ENCODE measurements at regions of chr1 and their contacts with region 1.

Region 1: DNA sequence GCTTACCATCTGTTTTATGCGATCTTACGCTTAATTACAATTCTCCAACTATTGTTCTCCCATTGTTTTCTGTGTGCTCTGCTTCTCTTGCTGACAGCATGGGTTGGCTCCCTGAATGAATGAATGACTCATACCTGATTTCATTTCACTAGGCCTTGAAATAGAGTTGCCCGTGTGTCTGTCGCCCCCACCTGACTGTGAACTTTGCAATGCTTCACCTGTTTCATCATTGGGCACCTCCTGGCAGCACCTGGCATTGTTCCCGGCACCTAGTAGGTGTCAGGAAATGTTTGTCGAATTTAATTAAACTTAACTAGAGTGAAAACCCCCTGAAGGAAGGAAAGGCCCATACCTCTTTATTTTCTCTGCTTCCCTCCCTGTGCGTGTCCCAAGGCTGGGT is 120.5 kb upstream of the KLHDC7A start:
- DNase-seq: no peak
- ATAC-seq: no peak
- H3K4me3 ChIP-seq: no peak overlapping the region
- H3K27ac ChIP-seq: no peak overlapping the region
- H3K4me1 ChIP-seq: no peaks in the 10 kb centered on the region
- H3K27me3 ChIP-seq: peaks cover 0 to 67% (median 5%) of the 10 kb centered on the region in 9 donors
- CTCF ChIP-seq: no peak
- POLR2A ChIP-seq: no peak

Region 2: GRCh38 chr1:18199462-18199861 is 160.8 kb before region 1 on chr1:
- intact Hi-C with region 1: no loop called
- DNase-seq: no peak
- ATAC-seq: no peak
- H3K4me3 ChIP-seq: no peak overlapping the region
- H3K27ac ChIP-seq: no peak overlapping the region
- H3K4me1 ChIP-seq: no peaks in the 10 kb centered on the region
- H3K27me3 ChIP-seq: peaks cover 0 to 68% (median 14%) of the 10 kb centered on the region in 9 donors
- CTCF ChIP-seq: no peak
- POLR2A ChIP-seq: no peak

Region 3: DNA sequence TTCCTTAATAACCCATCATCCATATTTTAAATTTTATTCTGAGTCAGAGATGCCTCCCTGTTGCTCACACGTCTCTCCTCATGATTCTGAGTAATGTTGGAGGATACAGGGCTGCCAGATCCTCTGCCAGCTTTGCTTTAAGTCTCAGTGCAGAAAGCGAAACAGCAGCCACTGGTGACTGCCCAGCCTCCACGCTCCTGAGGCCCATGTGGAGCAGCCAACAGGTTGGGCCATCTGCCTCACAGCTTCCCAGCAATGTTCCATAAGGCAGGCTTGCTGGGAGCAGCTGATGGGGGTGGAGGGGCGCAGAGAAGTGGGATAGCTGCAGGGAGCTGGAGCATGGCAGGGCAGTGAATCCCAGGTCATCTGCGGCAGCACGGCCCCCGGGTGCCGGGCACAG is 148.5 kb before region 1 on chr1:
- intact Hi-C with region 1: no loop called
- DNase-seq: no peak
- ATAC-seq: peak in 1 of 4 donors; percentile 43
- H3K4me3 ChIP-seq: no peak overlapping the region
- H3K27ac ChIP-seq: no peak overlapping the region
- H3K4me1 ChIP-seq: no peaks in the 10 kb centered on the region
- H3K27me3 ChIP-seq: peaks cover 0 to 14% (median 0%) of the 10 kb centered on the region in 9 donors
- CTCF ChIP-seq: no peak
- POLR2A ChIP-seq: no peak

Region 4: DNA sequence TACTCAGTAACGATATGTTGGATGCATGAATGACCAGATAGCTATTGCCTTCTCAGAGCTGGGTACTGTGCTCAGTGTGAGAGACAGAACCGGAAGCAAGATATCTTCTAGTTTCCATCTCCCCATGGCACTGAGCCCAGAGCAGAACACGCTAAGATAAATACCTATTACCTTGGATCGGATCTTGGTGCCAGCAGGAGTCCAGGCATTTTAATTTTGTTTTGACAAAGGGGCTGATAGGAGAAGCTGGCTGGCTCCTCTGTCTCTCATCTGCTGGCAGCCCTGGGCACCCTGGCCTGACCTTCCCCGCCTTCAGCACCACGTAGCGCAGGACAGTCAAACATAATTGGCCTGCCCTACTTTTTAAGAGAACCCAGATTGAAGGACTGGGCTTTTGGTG is 40.2 kb before region 1 on chr1:
- intact Hi-C with region 1: no loop called
- DNase-seq: no peak
- ATAC-seq: no peak
- H3K4me3 ChIP-seq: no peak overlapping the region
- H3K27ac ChIP-seq: no peak overlapping the region
- H3K4me1 ChIP-seq: no peaks in the 10 kb centered on the region
- H3K27me3 ChIP-seq: peaks cover 0 to 27% (median 4%) of the 10 kb centered on the region in 9 donors
- CTCF ChIP-seq: no peak
- POLR2A ChIP-seq: no peak

Region 5: GRCh38 chr1:18440385-18441226 is 80.4 kb after region 1 on chr1:
- intact Hi-C with region 1: loop called in 1 of 10 experiments (anchors 10 kb)
- DNase-seq: no peak
- ATAC-seq: no peak
- H3K4me3 ChIP-seq: no peak overlapping the region
- H3K27ac ChIP-seq: no peak overlapping the region
- H3K4me1 ChIP-seq: no peaks in the 10 kb centered on the region
- H3K27me3 ChIP-seq: peaks cover 0 to 26% (median 3%) of the 10 kb centered on the region in 9 donors
- CTCF ChIP-seq: no peak
- POLR2A ChIP-seq: no peak

Measured in heart left ventricle (tissue), 16 donors.